ENCODE measurements at regions of chr10 and their contacts with region 1.

Region 1: DNA sequence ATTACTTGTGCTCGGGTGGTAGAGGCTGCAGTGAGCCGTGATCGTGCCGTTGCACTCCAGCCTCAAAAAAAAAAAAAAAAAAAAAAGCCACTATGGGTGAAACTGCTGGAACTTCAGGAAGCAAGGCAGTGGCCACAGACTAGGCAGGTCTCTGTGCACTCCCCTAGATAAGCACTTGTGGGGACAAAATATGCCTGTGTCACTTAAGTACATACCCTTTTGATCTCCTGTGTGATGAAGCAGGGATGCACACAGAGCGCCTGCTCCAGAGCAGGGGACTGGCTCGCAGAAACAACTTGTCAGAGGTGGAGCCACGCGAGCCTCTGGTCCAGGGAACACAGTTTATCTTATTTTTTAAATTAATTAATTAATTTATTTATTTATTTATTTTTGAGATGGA is 42.9 kb upstream of the PSAP start:
- DNase-seq: no peak
- ATAC-seq: no peak
- H3K4me3 ChIP-seq: no peak overlapping the region
- H3K4me3 Mint-ChIP-seq: no peak overlapping the region
- H3K27ac ChIP-seq: no peak overlapping the region
- H3K27ac Mint-ChIP-seq: no peak overlapping the region
- H3K4me1 ChIP-seq: peaks cover 5% of the 10 kb centered on the region
- H3K4me1 Mint-ChIP-seq: peaks cover 4% of the 10 kb centered on the region
- H3K27me3 ChIP-seq: no peaks in the 10 kb centered on the region
- H3K27me3 Mint-ChIP-seq: peaks cover 4% of the 10 kb centered on the region
- CTCF ChIP-seq: no peak

Region 2: GRCh38 chr10:71383972-71384687 is 509.8 kb before region 1 on chr10:
- CTCF ChIA-PET with region 1: interaction called, 14 read pairs
- POLR2A ChIA-PET with region 1: no interaction called
- intact Hi-C with region 1: loop called in 1 of 2 experiments (anchors 10 kb)
- DNase-seq: peak; percentile 56 to 83 (median 76)
- ATAC-seq: peak; percentile 89
- H3K4me3 ChIP-seq: no peak overlapping the region
- H3K4me3 Mint-ChIP-seq: no peak overlapping the region
- H3K27ac ChIP-seq: no peak overlapping the region
- H3K27ac Mint-ChIP-seq: no peak overlapping the region
- H3K4me1 ChIP-seq: no peaks in the 10 kb centered on the region
- H3K4me1 Mint-ChIP-seq: no peaks in the 10 kb centered on the region
- H3K27me3 ChIP-seq: peaks cover 0 to 3% of the 10 kb centered on the region in 2 experiments
- H3K27me3 Mint-ChIP-seq: no peaks in the 10 kb centered on the region
- CTCF ChIP-seq: peak; percentile 83

Region 3: DNA sequence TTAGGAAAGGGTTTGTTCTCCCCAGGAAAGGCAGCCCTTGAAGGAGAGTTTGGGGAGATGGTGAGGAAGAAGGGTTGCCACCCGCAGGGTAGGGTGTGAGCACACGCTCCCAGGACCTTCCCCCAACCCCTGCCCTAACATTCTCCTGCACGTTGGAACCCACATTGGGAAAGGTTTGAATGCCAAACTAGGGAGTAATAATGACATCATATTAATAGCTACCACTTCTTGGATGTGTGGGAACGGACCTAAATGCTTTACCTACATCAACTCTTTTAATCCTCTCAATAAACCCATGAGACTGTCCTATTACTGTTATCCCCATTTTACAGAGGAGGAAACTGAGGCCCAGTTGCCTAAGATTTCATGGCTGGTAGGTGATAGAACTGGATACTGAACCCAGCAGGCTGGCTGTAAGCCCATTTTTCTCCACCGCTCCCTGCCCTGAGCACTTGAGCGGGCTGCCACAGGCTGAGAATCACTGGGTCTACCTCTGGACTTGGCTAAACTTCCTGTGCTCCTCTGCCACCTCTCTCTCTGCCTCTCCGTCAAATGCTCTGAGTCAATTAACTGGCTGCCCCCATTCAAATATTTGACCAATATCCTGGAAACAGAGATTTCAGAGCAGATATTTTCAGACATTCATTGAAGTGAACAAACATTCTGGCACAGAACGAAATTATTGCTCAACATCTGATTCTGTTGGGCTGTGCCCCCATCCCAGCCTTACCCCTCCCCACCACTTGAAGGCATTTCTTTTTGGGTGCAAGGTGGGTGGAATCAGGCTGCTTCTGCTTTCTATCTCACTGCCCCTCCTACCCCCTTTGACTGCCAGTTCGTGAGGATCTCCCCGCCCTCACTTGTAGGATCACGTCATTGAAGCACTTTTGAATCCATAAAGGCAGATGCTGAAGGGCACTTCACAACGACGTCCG is 304.0 kb before region 1 on chr10:
- CTCF ChIA-PET with region 1: no interaction called
- POLR2A ChIA-PET with region 1: no interaction called
- intact Hi-C with region 1: no loop called
- DNase-seq: no peak
- ATAC-seq: no peak
- H3K4me3 ChIP-seq: no peak overlapping the region
- H3K4me3 Mint-ChIP-seq: no peak overlapping the region
- H3K27ac ChIP-seq: no peak overlapping the region
- H3K27ac Mint-ChIP-seq: no peak overlapping the region
- H3K4me1 ChIP-seq: no peaks in the 10 kb centered on the region
- H3K4me1 Mint-ChIP-seq: no peaks in the 10 kb centered on the region
- H3K27me3 ChIP-seq: no peaks in the 10 kb centered on the region
- H3K27me3 Mint-ChIP-seq: no peaks in the 10 kb centered on the region
- CTCF ChIP-seq: no peak

Region 4: DNA sequence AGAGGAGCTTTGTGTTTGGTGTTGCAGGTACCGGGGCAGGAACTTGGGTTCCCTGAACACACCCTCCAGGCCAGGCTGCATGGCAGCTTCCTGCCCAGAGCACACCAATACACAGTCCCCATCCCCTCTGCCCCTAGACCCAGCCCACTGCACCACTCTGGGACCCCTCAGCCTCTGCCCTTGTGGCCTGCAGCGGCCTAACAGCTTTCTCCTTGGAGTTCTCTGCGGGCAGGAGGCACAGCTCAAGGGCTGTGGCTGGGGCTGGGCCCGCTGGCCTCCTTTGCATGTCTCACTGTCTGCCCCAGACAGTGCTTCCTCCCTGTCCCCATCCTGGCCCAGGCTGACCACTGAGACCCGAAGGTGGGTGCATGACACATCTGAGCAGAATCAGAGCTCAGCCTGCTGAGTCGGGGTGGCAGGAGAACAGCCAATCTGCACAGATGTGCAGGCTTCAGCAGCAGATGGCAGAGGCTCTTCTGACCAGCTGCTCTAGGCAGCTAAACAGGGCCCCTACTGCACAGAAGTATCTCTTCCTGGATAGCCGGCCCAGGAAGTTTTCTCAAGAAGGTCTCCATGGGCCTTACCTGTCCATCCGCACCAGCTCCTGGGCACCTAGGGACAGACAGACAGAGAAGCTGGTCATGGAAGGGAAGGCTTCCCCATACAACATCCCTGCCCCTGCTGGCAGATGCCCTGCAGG is 141.4 kb before region 1 on chr10:
- CTCF ChIA-PET with region 1: no interaction called
- POLR2A ChIA-PET with region 1: no interaction called
- intact Hi-C with region 1: no loop called
- DNase-seq: peak in 2 of 9 experiments; percentile 31 to 44
- ATAC-seq: no peak
- H3K4me3 ChIP-seq: peak overlapping the region in 1 of 2 experiments; percentile 29
- H3K4me3 Mint-ChIP-seq: peak overlapping the region; percentile 67
- H3K27ac ChIP-seq: peak overlapping the region; percentile 4 to 73
- H3K27ac Mint-ChIP-seq: peak overlapping the region; percentile 93
- H3K4me1 ChIP-seq: peaks cover 100% of the 10 kb centered on the region
- H3K4me1 Mint-ChIP-seq: peaks cover 96% of the 10 kb centered on the region
- H3K27me3 ChIP-seq: no peaks in the 10 kb centered on the region
- H3K27me3 Mint-ChIP-seq: no peaks in the 10 kb centered on the region
- CTCF ChIP-seq: no peak

Region 5: GRCh38 chr10:71850637-71851464 is 43.1 kb before region 1 on chr10 and contains the start of gene PSAP:
- CTCF ChIA-PET with region 1: interaction called, 6 read pairs
- POLR2A ChIA-PET with region 1: no interaction called
- intact Hi-C with region 1: loop called in 1 of 2 experiments (anchors 1 kb)
- DNase-seq: peak; percentile 96 to 99 (median 99)
- ATAC-seq: peak; percentile 97
- H3K4me3 ChIP-seq: peak within 1 kb of the TSS; percentile 87 to 94
- H3K4me3 Mint-ChIP-seq: peak within 1 kb of the TSS; percentile 94
- H3K27ac ChIP-seq: peak within 1 kb of the TSS; percentile 78 to 79
- H3K27ac Mint-ChIP-seq: peak within 1 kb of the TSS; percentile 94
- H3K4me1 ChIP-seq: peaks cover 26% of the 10 kb centered on the region
- H3K4me1 Mint-ChIP-seq: peaks cover 49% of the 10 kb centered on the region
- H3K27me3 ChIP-seq: no peaks in the 10 kb centered on the region
- H3K27me3 Mint-ChIP-seq: no peaks in the 10 kb centered on the region
- CTCF ChIP-seq: no peak
- total RNA-seq, gene PSAP: 156 to 161 TPM

Region 6: DNA sequence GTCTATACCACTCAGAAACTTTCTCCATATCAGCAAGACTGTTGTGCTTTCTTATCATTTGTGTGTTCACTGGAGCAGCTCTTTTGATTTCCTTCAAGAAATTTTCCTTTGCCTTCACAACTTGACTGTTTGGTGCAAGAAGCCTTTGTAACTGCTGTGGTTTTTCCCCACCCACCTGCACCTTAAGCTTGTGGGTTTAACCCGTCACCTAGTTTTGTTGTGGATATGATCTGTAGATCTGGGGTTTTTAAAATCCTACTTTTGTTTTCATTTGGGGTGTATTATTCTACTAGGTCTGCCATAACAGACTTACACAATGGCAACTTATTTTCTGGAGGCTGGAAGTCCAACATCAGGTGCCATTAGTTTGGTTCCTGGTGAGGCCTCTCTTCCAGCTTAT is 39.7 kb after region 1 on chr10:
- CTCF ChIA-PET with region 1: interaction called, 18 read pairs
- POLR2A ChIA-PET with region 1: no interaction called
- intact Hi-C with region 1: no loop called
- DNase-seq: peak in 5 of 9 experiments; percentile 6 to 72 (median 28)
- ATAC-seq: peak; percentile 46
- H3K4me3 ChIP-seq: no peak overlapping the region
- H3K4me3 Mint-ChIP-seq: peak overlapping the region; percentile 9
- H3K27ac ChIP-seq: peak overlapping the region in 1 of 2 experiments; percentile 25
- H3K27ac Mint-ChIP-seq: peak overlapping the region; percentile 50
- H3K4me1 ChIP-seq: peaks cover 25% of the 10 kb centered on the region
- H3K4me1 Mint-ChIP-seq: peaks cover 38% of the 10 kb centered on the region
- H3K27me3 ChIP-seq: no peaks in the 10 kb centered on the region
- H3K27me3 Mint-ChIP-seq: no peaks in the 10 kb centered on the region
- CTCF ChIP-seq: no peak

Region 7: GRCh38 chr10:71975891-71976725 is 82.2 kb after region 1 on chr10:
- CTCF ChIA-PET with region 1: interaction called, 12 read pairs
- POLR2A ChIA-PET with region 1: no interaction called
- intact Hi-C with region 1: no loop called
- DNase-seq: no peak
- ATAC-seq: no peak
- H3K4me3 ChIP-seq: no peak overlapping the region
- H3K4me3 Mint-ChIP-seq: no peak overlapping the region
- H3K27ac ChIP-seq: no peak overlapping the region
- H3K27ac Mint-ChIP-seq: no peak overlapping the region
- H3K4me1 ChIP-seq: no peaks in the 10 kb centered on the region
- H3K4me1 Mint-ChIP-seq: no peaks in the 10 kb centered on the region
- H3K27me3 ChIP-seq: no peaks in the 10 kb centered on the region
- H3K27me3 Mint-ChIP-seq: no peaks in the 10 kb centered on the region
- CTCF ChIP-seq: no peak

Region 8: DNA sequence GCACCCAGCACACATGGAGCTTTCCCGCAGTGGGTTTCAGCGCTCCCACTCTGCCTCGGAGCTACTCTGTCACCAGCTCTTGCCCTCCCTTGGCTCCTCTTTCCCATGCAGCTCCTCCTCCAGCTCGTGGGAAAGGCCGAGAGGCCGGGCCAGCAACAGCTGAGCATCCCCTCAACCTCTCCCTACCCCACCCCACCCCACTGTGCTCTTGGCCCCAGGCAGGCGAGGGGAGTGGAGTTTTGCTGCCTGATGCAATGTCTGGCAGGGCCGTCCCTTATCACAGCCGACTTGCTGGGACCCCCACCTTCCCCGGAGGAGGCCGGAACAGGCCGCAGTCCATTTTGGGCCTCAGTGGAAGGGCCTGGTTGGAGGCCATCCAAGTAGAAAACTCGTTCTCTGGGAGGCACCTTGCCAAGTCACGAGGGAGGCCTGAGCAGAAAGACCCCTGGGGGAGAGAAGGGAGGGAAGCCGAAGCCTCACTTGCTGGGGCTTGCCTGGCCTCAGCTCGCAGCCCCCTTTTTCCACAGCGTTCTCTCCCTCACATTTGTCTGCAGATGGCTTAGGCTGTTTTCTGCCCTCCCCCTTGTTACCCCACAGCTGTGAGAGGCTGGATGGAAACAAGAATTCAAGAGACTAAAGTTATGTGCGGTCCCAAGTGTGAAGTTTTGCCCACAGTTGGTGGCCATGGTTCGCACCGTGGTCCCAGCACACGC is 105.6 kb after region 1 on chr10:
- CTCF ChIA-PET with region 1: no interaction called
- POLR2A ChIA-PET with region 1: no interaction called
- intact Hi-C with region 1: no loop called
- DNase-seq: peak in 1 of 9 experiments; percentile 13
- ATAC-seq: no peak
- H3K4me3 ChIP-seq: no peak overlapping the region
- H3K4me3 Mint-ChIP-seq: no peak overlapping the region
- H3K27ac ChIP-seq: no peak overlapping the region
- H3K27ac Mint-ChIP-seq: no peak overlapping the region
- H3K4me1 ChIP-seq: no peaks in the 10 kb centered on the region
- H3K4me1 Mint-ChIP-seq: no peaks in the 10 kb centered on the region
- H3K27me3 ChIP-seq: no peaks in the 10 kb centered on the region
- H3K27me3 Mint-ChIP-seq: no peaks in the 10 kb centered on the region
- CTCF ChIP-seq: no peak

Region 9: DNA sequence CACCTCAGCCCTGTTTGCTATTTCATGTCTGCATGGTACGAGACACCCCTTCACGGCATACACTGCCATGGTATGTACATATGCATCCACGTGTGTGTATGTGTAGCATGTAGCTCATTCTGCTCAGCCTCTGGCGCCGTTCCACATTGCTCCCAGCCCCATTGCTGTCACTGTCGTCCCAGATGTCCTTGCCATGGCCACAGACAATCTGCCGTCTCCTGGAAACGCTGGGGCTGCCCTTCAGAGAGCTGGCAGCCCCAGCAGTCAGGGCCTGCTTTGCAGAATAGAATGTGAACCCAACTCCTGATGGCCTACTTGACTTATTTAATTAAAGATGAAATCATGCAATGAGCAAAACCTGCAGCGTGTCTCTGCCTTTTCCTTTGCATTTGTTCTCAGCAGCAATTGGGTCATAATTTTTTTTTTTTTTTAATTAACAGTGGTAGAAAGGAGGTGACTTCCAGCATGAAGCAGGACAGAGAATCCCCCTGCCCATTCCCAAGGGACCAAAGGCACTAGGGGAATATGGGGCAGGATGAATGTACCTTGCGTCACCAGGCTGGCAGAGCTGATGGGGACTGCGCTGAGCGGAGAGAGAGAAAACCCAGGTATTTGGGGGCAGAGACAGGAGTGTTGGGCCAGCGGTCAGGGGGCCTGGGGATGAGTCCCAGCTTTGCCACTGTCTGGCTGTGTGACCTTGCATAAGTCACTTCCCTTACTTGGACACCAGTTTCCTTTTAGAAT is 119.5 kb after region 1 on chr10:
- CTCF ChIA-PET with region 1: interaction called, 15 read pairs
- POLR2A ChIA-PET with region 1: no interaction called
- intact Hi-C with region 1: no loop called
- DNase-seq: no peak
- ATAC-seq: no peak
- H3K4me3 ChIP-seq: no peak overlapping the region
- H3K4me3 Mint-ChIP-seq: no peak overlapping the region
- H3K27ac ChIP-seq: no peak overlapping the region
- H3K27ac Mint-ChIP-seq: no peak overlapping the region
- H3K4me1 ChIP-seq: no peaks in the 10 kb centered on the region
- H3K4me1 Mint-ChIP-seq: no peaks in the 10 kb centered on the region
- H3K27me3 ChIP-seq: no peaks in the 10 kb centered on the region
- H3K27me3 Mint-ChIP-seq: no peaks in the 10 kb centered on the region
- CTCF ChIP-seq: no peak

Region 10: DNA sequence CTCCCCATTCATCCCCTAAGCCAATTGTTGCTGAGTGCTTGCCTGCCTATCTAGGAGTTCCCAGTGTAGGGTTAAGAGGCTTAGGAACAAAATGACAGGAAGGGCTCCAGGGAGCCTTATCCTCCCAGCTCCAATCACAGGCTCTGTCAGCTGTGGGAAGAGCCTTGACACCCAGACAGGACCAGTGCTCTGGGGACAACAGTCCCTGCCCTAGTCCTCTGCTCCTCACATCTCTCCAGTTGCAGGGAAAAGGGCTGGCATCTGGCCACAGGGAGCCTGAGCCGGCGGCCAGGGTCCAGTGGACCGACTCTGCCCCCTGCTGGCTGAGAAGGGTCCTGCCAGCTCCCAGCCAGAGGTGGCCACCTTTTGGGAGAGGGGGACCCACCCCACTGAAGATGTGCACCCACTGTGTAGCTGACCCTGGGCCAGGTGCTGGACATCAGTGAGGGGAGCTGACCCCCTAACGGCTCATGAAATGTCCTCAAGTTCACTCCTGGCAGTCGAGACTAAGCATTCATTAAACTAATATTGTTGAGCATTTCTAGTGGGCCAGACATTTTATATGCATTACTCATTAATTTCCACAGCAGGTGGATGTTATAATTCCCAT is 443.2 kb after region 1 on chr10:
- CTCF ChIA-PET with region 1: interaction called, 31 read pairs
- POLR2A ChIA-PET with region 1: no interaction called
- intact Hi-C with region 1: loop called (anchors 1 to 2 kb)
- DNase-seq: peak in 8 of 9 experiments; percentile 46 to 85 (median 72)
- ATAC-seq: no peak
- H3K4me3 ChIP-seq: no peak overlapping the region
- H3K4me3 Mint-ChIP-seq: no peak overlapping the region
- H3K27ac ChIP-seq: no peak overlapping the region
- H3K27ac Mint-ChIP-seq: peak overlapping the region; percentile 66
- H3K4me1 ChIP-seq: peaks cover 55% of the 10 kb centered on the region
- H3K4me1 Mint-ChIP-seq: peaks cover 55% of the 10 kb centered on the region
- H3K27me3 ChIP-seq: no peaks in the 10 kb centered on the region
- H3K27me3 Mint-ChIP-seq: no peaks in the 10 kb centered on the region
- CTCF ChIP-seq: peak; percentile 96